Stomach (tissue), 19 donors: ENCODE measurements at regions of chr22 and their contacts with region 1.

Region 1: GRCh38 chr22:25987948-25988347 is 181.3 kb upstream of the SEZ6L start:
- DNase-seq: peak in 1 of 2 donors; percentile 41
- H3K4me3 ChIP-seq: no peak overlapping the region
- H3K27ac ChIP-seq: no peak overlapping the region
- H3K4me1 ChIP-seq: no peaks in the 10 kb centered on the region
- H3K27me3 ChIP-seq: peaks cover 0 to 35% (median 0%) of the 10 kb centered on the region in 3 donors
- CTCF ChIP-seq: no peak
- EP300 ChIP-seq: no peak
- POLR2A ChIP-seq: no peak

Region 2: GRCh38 chr22:25928038-25928437 is 59.9 kb before region 1 on chr22:
- intact Hi-C with region 1: loop called (anchors 10 kb)
- DNase-seq: no peak
- H3K4me3 ChIP-seq: no peak overlapping the region
- H3K27ac ChIP-seq: no peak overlapping the region
- H3K4me1 ChIP-seq: no peaks in the 10 kb centered on the region
- H3K27me3 ChIP-seq: peaks cover 0 to 63% (median 12%) of the 10 kb centered on the region in 3 donors
- CTCF ChIP-seq: no peak
- EP300 ChIP-seq: no peak
- POLR2A ChIP-seq: no peak

Region 3: DNA sequence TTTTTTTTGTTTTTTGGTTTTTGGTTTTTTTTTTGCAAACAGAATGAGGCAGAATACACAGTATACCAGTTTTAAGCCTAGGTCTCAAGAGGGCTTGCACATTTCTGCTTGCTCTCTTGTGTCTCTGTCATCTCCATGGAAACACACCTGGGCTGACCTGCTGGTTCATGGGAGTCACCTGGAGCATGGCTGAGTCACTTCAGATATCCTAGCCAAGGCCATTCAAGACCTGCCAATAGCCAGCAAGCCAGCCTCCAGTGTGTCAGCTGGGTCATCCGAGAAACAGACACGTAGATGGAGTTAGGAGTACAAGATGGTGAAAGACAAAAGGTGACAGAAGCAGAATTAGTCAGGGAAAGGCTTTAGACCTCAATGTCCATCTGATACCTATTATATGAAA is 57.1 kb after region 1 on chr22:
- intact Hi-C with region 1: loop called (anchors 10 kb)
- DNase-seq: peak in 1 of 2 donors; percentile 16
- H3K4me3 ChIP-seq: no peak overlapping the region
- H3K27ac ChIP-seq: no peak overlapping the region
- H3K4me1 ChIP-seq: no peaks in the 10 kb centered on the region
- H3K27me3 ChIP-seq: peaks cover 0 to 35% (median 0%) of the 10 kb centered on the region in 3 donors
- CTCF ChIP-seq: no peak
- EP300 ChIP-seq: no peak
- POLR2A ChIP-seq: no peak